ENCODE measurements at regions of chr12 and their contacts with region 1.

Region 1: GRCh38 chr12:49842519-49843352 is at the start of gene BCDIN3D:
- DNase-seq: peak; percentile 91
- H3K4me3 ChIP-seq: peak within 1 kb of the TSS; percentile 24 to 71 (median 71)
- H3K27ac ChIP-seq: peak within 1 kb of the TSS; percentile 50
- H3K4me1 ChIP-seq: peaks cover 12% of the 10 kb centered on the region
- H3K27me3 ChIP-seq: peaks cover 4 to 5% of the 10 kb centered on the region in 2 experiments
- CTCF ChIP-seq: no peak
- POLR2A ChIP-seq: peak; percentile 91
- total RNA-seq, gene BCDIN3D: 2.5 and 3.1 TPM in 2 replicates

Region 2: DNA sequence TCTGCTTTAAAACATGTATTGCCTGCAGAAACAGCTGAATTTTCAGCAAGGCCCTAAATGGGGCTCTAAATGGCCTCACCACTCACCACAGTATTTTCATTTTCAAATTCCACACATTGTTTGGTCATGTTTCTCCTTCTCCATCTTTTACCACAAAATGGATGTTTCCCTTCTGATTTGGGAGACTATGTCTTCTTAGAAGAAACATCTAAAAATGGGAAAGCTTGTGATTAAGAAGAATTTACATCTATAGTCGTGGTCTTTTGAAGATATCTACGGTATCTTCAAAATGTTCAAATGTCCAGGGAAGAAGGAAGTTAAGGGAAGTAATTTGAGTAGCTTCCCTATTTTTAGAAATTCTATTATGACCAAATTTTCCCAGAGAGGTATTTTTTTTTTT is 598.6 kb before region 1 on chr12:
- CTCF ChIA-PET with region 1: no interaction called
- POLR2A ChIA-PET with region 1: no interaction called
- dilution Hi-C with region 1: no loop called
- intact Hi-C with region 1: no loop called
- DNase-seq: no peak
- H3K4me3 ChIP-seq: no peak overlapping the region
- H3K27ac ChIP-seq: no peak overlapping the region
- H3K4me1 ChIP-seq: no peaks in the 10 kb centered on the region
- H3K27me3 ChIP-seq: no peaks in the 10 kb centered on the region
- CTCF ChIP-seq: no peak
- POLR2A ChIP-seq: no peak

Region 3: DNA sequence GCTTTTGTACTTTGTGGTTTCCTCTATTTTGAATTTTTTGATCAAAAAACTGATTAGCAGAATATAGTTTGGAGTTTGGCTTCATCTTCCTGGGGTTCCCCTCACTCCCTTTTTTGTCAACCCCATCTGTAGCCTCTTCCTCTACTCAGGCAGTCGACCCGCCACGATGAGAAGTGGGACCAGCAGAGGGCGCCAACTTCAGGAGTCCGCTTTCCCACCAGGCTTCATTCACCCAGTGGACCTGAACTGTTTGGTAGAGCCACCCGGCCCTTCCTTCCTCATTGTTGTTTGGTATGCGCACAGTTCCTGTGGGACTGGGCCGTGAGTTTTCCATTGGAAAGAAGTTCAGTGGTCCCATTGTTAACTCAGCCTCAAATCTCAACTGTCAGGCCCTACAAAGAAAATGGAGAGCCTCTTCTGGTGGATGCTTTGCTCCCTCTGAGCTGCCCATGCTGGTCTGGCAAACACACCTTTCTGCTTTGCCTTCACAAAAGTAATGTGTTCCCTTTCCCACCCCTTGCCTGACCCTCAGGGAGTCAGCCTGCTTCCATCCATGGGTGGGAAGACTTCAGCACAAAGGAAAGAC is 79.6 kb before region 1 on chr12:
- CTCF ChIA-PET with region 1: interaction called, 54 read pairs
- POLR2A ChIA-PET with region 1: no interaction called
- dilution Hi-C with region 1: no loop called
- intact Hi-C with region 1: loop called (anchors 1 kb)
- DNase-seq: peak; percentile 75
- H3K4me3 ChIP-seq: no peak overlapping the region
- H3K27ac ChIP-seq: peak overlapping the region; percentile 22
- H3K4me1 ChIP-seq: peaks cover 19% of the 10 kb centered on the region
- H3K27me3 ChIP-seq: no peaks in the 10 kb centered on the region
- CTCF ChIP-seq: peak; percentile 86 to 92
- POLR2A ChIP-seq: no peak

Region 4: DNA sequence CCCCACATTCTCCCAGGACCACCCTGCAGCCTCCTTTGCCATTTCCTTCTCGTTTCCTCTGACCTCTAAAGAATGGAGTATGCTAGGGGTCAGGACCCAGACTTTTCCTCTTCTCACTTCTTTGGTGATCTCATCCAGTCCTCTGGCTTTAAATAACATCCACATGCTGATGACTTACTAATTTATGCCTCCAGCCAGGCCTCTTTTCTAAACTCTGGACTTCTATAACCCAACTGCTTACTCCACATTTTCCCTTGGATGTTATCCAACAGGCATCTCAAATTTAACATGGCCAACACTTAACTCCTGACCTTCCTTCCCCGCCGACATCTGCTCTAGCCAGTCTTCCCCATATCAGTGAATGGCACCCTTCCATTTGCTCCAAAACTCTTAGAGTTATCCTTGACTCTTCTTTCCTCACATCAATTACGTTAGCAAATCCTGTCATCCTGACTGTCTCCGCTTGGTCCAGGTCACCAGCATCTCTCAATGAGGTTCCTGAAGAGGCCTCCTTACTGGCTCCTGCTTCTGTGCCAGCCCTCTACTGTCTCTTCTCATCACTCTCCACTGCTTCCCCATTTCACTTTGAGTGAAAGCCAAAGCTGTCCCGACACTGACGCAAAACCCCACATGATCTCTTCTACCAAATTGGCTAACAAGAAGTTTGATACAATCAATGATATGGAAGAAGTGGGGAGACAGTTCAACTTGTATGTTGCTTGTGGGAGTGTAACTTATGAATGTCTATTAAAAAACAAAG is 58.6 kb before region 1 on chr12:
- CTCF ChIA-PET with region 1: interaction called, 115 read pairs
- POLR2A ChIA-PET with region 1: interaction called, 5 read pairs
- dilution Hi-C with region 1: no loop called
- intact Hi-C with region 1: no loop called
- DNase-seq: peak; percentile 97
- H3K4me3 ChIP-seq: no peak overlapping the region
- H3K27ac ChIP-seq: peak overlapping the region; percentile 92
- H3K4me1 ChIP-seq: peaks cover 29% of the 10 kb centered on the region
- H3K27me3 ChIP-seq: peaks cover 0 to 2% of the 10 kb centered on the region in 2 experiments
- CTCF ChIP-seq: no peak
- POLR2A ChIP-seq: peak; percentile 89

Region 5: GRCh38 chr12:49809906-49810389 is 32.8 kb before region 1 on chr12:
- CTCF ChIA-PET with region 1: interaction called, 54 read pairs
- POLR2A ChIA-PET with region 1: interaction called, 3 read pairs
- dilution Hi-C with region 1: no loop called
- intact Hi-C with region 1: no loop called
- DNase-seq: no peak
- H3K4me3 ChIP-seq: no peak overlapping the region
- H3K27ac ChIP-seq: no peak overlapping the region
- H3K4me1 ChIP-seq: no peaks in the 10 kb centered on the region
- H3K27me3 ChIP-seq: no peaks in the 10 kb centered on the region
- CTCF ChIP-seq: no peak
- POLR2A ChIP-seq: no peak

Region 6: GRCh38 chr12:49828133-49829091 is 14.3 kb before region 1 on chr12 and contains the start of gene NCKAP5L:
- CTCF ChIA-PET with region 1: interaction called, 54 read pairs
- POLR2A ChIA-PET with region 1: interaction called, 10 read pairs
- dilution Hi-C with region 1: no loop called
- intact Hi-C with region 1: loop called (anchors 1 kb)
- DNase-seq: peak; percentile 97
- H3K4me3 ChIP-seq: peak within 1 kb of the TSS; percentile 58 to 76 (median 72)
- H3K27ac ChIP-seq: peak within 1 kb of the TSS; percentile 52
- H3K4me1 ChIP-seq: peaks cover 35% of the 10 kb centered on the region
- H3K27me3 ChIP-seq: no peaks in the 10 kb centered on the region
- CTCF ChIP-seq: no peak
- POLR2A ChIP-seq: peak; percentile 75
- total RNA-seq, gene NCKAP5L: 46.1 and 52.1 TPM in 2 replicates

Region 7: DNA sequence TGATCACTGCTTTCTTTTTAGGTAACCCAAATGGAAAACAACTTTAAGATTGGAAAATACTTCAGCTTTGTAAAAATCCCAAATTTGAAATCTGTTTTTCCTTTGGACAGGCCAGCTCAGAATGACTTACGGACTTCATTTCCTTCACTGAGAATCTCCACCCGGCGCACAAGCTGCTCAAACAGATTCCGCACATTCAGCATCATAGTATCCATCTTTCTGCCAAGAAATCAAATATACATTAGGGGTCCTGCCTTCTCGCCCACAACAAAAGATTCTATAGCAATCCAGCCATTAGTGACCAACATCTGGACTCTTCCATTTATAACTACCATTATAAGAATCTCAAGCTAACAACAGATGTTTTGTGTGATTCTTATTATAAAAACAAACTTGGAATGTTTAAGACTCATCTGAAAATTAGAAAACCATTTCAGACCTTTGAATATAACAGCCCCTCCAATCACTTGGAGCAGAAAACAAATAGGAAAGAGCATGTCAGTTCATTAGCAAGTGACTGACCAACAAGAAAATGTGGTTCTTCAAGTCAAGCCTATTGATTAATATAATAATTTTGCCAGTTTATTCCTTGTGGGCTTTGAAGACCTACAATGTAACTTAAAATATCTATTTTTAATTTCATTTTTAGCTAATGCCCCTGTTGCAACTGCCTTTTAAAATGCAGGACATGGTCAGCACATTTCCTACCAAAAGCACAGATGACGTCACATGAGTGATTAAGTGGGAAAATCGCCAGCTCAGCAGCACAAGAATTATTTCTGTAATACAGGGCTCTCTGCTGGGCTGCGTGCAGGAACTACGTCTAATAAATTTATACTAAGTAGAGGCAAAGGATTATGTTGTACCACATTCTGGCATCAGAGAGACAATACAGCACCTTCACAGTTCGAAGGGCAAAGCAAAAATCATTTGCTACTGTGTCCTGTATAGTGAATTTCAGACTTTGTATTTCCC is 174.1 kb after region 1 on chr12:
- CTCF ChIA-PET with region 1: no interaction called
- POLR2A ChIA-PET with region 1: no interaction called
- dilution Hi-C with region 1: no loop called
- intact Hi-C with region 1: no loop called
- DNase-seq: peak; percentile 83
- H3K4me3 ChIP-seq: no peak overlapping the region
- H3K27ac ChIP-seq: no peak overlapping the region
- H3K4me1 ChIP-seq: peaks cover 7% of the 10 kb centered on the region
- H3K27me3 ChIP-seq: no peaks in the 10 kb centered on the region
- CTCF ChIP-seq: no peak
- POLR2A ChIP-seq: no peak